Activated CD8-positive, alpha-beta memory T cell treated with anti-CD3 and anti-CD28 coated beads, Interleukin-2, amount 10 ng/mL, durations not matched to agents 7 days and 5 days (primary cell): ENCODE measurements at regions of chr20 and their contacts with region 1.

Region 1: GRCh38 chr20:44217342-44218092 is 6.9 kb upstream of the OSER1 start:
- DNase-seq: peak; percentile 80
- ATAC-seq: peak; percentile 62
- H3K4me3 Mint-ChIP-seq: peak overlapping the region; percentile 60
- H3K27ac Mint-ChIP-seq: peak overlapping the region; percentile 76
- H3K4me1 Mint-ChIP-seq: peaks cover 40% of the 10 kb centered on the region
- H3K27me3 Mint-ChIP-seq: peaks cover 2% of the 10 kb centered on the region

Region 2: DNA sequence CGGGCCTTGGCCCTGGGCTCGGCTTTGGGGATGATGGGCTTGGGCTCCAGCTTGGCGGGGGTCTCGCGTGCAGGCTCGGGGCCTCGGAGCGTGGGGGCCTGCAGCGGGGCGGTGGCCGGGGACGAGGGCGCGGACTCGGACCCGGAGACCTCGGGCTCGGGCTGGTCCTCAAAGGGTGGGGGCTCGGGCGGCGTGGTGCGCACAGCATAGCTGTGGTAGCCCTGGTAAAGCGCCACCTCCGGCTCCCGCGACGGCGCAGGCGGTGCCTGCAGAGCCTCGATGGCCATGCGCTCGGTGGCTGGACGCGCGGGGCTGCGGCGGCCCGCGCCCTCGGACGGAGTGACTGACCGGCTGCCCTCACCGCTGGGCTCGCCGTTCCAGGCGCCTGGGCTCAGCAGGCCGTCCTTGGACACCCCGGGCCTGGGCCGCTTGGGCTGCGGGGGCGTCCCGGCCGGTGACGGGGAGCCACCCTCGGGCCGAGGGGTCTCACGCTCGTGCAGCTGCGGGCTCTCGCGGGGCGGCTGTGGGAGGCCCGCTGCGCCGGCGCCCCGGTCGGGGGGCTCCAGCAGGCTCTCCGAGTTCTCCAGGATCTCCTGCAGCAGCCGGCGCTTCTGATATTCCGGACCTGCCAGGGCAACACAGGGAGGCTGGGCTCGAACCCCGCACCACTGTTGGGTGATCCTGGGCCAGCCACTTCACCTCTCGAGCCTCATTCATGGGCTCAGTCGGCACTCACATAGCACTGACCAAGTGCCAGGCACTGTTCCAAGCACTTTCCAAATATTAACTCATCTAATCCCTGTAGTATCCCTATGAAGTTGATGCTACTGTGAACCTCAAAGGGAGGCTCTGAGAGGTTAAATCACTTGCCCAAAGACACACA is 101.5 kb before region 1 on chr20:
- CTCF ChIA-PET with region 1: interaction called, 20 read pairs
- DNase-seq: no peak
- ATAC-seq: no peak
- H3K4me3 Mint-ChIP-seq: no peak overlapping the region
- H3K27ac Mint-ChIP-seq: no peak overlapping the region
- H3K4me1 Mint-ChIP-seq: peaks cover 9% of the 10 kb centered on the region
- H3K27me3 Mint-ChIP-seq: peaks cover 28% of the 10 kb centered on the region

Region 3: GRCh38 chr20:44196271-44196670 is 21.2 kb before region 1 on chr20:
- CTCF ChIA-PET with region 1: interaction called, 36 read pairs
- DNase-seq: no peak
- ATAC-seq: no peak
- H3K4me3 Mint-ChIP-seq: no peak overlapping the region
- H3K27ac Mint-ChIP-seq: no peak overlapping the region
- H3K4me1 Mint-ChIP-seq: peaks cover 40% of the 10 kb centered on the region
- H3K27me3 Mint-ChIP-seq: peaks cover 7% of the 10 kb centered on the region

Region 4: GRCh38 chr20:44310664-44311639 is 93.4 kb after region 1 on chr20 and contains the start of gene FITM2:
- CTCF ChIA-PET with region 1: interaction called, 386 read pairs
- DNase-seq: peak; percentile 98
- ATAC-seq: peak; percentile 97
- H3K4me3 Mint-ChIP-seq: peak within 1 kb of the TSS; percentile 82
- H3K27ac Mint-ChIP-seq: peak within 1 kb of the TSS; percentile 84
- H3K4me1 Mint-ChIP-seq: peaks cover 17% of the 10 kb centered on the region
- H3K27me3 Mint-ChIP-seq: no peaks in the 10 kb centered on the region
- total RNA-seq, gene FITM2: 2.4 to 2.5 TPM

Region 5: GRCh38 chr20:44367746-44368145 is 150.2 kb after region 1 on chr20:
- CTCF ChIA-PET with region 1: interaction called, 17 read pairs
- DNase-seq: no peak
- ATAC-seq: no peak
- H3K4me3 Mint-ChIP-seq: no peak overlapping the region
- H3K27ac Mint-ChIP-seq: no peak overlapping the region
- H3K4me1 Mint-ChIP-seq: no peaks in the 10 kb centered on the region
- H3K27me3 Mint-ChIP-seq: peaks cover 2% of the 10 kb centered on the region

Region 6: GRCh38 chr20:44398303-44398702 is 180.8 kb after region 1 on chr20:
- CTCF ChIA-PET with region 1: no interaction called
- DNase-seq: no peak
- ATAC-seq: no peak
- H3K4me3 Mint-ChIP-seq: no peak overlapping the region
- H3K27ac Mint-ChIP-seq: no peak overlapping the region
- H3K4me1 Mint-ChIP-seq: no peaks in the 10 kb centered on the region
- H3K27me3 Mint-ChIP-seq: peaks cover 20% of the 10 kb centered on the region

Region 7: DNA sequence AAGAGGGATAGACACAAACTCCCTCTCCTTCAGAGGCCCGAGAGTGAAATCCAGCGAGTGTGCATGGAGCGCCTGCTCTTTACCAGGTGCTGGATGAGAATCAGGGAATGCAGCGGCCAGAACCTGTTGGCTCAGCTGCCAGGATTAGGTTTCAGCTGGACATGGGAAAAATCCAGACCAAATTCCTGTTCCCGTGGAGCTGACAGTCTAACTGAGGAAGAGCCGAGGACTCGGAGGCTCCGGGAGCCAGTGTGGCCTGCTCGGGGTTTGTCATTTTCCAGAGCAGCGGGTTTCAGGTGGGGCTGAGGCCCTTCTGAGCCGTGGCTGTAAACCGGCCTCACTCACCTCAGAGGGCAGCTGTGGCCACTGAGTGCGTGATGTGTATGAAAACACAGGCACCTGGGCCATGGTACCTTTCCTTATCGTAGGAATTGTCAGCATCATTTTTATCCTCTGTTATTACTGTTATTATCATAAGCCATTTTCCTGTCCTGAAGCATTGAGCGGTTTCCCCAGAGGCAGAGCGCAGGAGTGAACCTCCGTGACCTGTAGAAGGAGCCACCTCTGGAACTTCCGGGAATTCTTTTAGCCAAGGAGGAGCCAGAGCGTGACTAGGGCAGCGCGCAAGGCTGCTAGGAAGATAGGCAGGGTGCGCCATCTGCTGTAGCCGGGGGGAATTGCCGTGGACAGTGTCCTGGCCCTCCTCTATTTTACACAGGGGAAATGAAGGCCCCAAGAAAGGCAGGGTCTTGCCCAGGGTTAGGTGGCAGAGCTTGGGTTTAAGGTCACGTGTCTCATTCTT is 392.2 kb after region 1 on chr20:
- CTCF ChIA-PET with region 1: interaction called, 29 read pairs
- DNase-seq: peak; percentile 86
- ATAC-seq: peak; percentile 98
- H3K4me3 Mint-ChIP-seq: no peak overlapping the region
- H3K27ac Mint-ChIP-seq: peak overlapping the region; percentile 70
- H3K4me1 Mint-ChIP-seq: peaks cover 10% of the 10 kb centered on the region
- H3K27me3 Mint-ChIP-seq: no peaks in the 10 kb centered on the region